Activated CD4-positive, alpha-beta T cell treated with anti-CD3 and anti-CD28 coated beads for 36 hours (primary cell): ENCODE measurements at regions of chr15 and their contacts with region 1.

Region 1: GRCh38 chr15:44711356-44712107 is at the start of gene B2M:
- DNase-seq: peak; percentile 97
- ATAC-seq: peak; percentile 78
- H3K4me3 Mint-ChIP-seq: peak within 1 kb of the TSS; percentile 96
- H3K27ac Mint-ChIP-seq: peak within 1 kb of the TSS; percentile 100
- H3K4me1 Mint-ChIP-seq: peaks cover 34% of the 10 kb centered on the region
- H3K27me3 Mint-ChIP-seq: no peaks in the 10 kb centered on the region
- total RNA-seq, gene B2M: 5,181 to 7,416 TPM

Region 2: GRCh38 chr15:44633603-44634002 is 77.9 kb before region 1 on chr15:
- CTCF ChIA-PET with region 1: interaction called, 4 read pairs
- POLR2A ChIA-PET with region 1: no interaction called
- intact Hi-C with region 1: loop called (anchors 2 kb)
- DNase-seq: peak; percentile 13
- ATAC-seq: peak; percentile 77
- H3K4me3 Mint-ChIP-seq: peak overlapping the region; percentile 65
- H3K27ac Mint-ChIP-seq: peak overlapping the region; percentile 98
- H3K4me1 Mint-ChIP-seq: peaks cover 26% of the 10 kb centered on the region
- H3K27me3 Mint-ChIP-seq: no peaks in the 10 kb centered on the region

Region 3: DNA sequence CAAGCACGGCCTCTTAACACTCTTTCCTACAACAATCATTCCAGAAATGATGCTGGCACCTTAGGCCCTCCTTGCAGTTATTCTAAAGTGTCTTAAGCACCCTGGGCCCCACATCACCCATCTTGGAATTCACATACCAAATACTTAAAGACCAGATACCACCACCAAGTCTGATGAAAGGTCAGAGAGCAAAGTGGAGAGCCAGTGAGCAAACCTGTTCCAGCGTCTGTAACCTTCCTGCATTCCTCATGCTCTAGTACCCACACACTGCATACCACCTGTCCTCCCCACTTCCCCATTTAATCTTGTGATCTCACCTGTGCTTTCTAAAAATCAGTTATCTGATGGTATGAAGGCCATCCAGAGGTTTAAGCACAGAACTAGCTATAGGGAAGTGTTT is 41.0 kb before region 1 on chr15:
- CTCF ChIA-PET with region 1: interaction called, 209 read pairs
- POLR2A ChIA-PET with region 1: interaction called, 274 read pairs
- intact Hi-C with region 1: no loop called
- DNase-seq: no peak
- ATAC-seq: no peak
- H3K4me3 Mint-ChIP-seq: no peak overlapping the region
- H3K27ac Mint-ChIP-seq: peak overlapping the region; percentile 65
- H3K4me1 Mint-ChIP-seq: peaks cover 87% of the 10 kb centered on the region
- H3K27me3 Mint-ChIP-seq: no peaks in the 10 kb centered on the region

Region 4: DNA sequence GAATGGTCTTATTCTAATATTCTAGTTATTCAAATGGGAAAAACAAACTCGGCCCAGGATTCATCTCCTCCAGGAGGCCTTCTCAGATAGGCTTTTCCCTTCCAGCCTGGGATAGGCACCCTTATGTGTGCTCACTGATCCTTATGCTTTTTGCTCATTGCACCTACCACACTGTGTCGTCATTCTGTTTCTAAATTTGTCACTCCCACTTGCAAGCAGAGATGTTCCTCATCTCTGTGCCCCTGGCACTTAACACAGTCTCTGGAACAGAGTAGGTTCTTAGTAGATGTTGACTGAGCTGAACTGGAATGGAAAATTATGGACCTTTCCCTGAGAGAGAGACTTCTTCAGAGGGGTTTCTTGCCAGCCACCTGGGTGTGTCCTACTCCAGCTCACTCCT is 29.3 kb before region 1 on chr15:
- CTCF ChIA-PET with region 1: interaction called, 11 read pairs
- POLR2A ChIA-PET with region 1: interaction called, 26 read pairs
- intact Hi-C with region 1: loop called (anchors 1 to 2 kb)
- DNase-seq: no peak
- ATAC-seq: peak; percentile 75
- H3K4me3 Mint-ChIP-seq: peak overlapping the region; percentile 50
- H3K27ac Mint-ChIP-seq: peak overlapping the region; percentile 92
- H3K4me1 Mint-ChIP-seq: peaks cover 72% of the 10 kb centered on the region
- H3K27me3 Mint-ChIP-seq: no peaks in the 10 kb centered on the region

Region 5: GRCh38 chr15:44728576-44729407 is 17.3 kb after region 1 on chr15:
- CTCF ChIA-PET with region 1: interaction called, 113 read pairs
- POLR2A ChIA-PET with region 1: interaction called, 474 read pairs
- intact Hi-C with region 1: loop called (anchors 1 kb)
- DNase-seq: peak; percentile 96
- ATAC-seq: peak; percentile 78
- H3K4me3 Mint-ChIP-seq: peak overlapping the region; percentile 91
- H3K27ac Mint-ChIP-seq: peak overlapping the region; percentile 99
- H3K4me1 Mint-ChIP-seq: peaks cover 68% of the 10 kb centered on the region
- H3K27me3 Mint-ChIP-seq: no peaks in the 10 kb centered on the region